RWPE1 (cell line): ENCODE measurements at regions of chr3 and their contacts with region 1.

Region 1: GRCh38 chr3:159311400-159311799 is 509.5 kb downstream of the MFSD1 start:
- DNase-seq: no peak
- H3K27ac ChIP-seq: no peak overlapping the region
- CTCF ChIP-seq: no peak

Region 2: DNA sequence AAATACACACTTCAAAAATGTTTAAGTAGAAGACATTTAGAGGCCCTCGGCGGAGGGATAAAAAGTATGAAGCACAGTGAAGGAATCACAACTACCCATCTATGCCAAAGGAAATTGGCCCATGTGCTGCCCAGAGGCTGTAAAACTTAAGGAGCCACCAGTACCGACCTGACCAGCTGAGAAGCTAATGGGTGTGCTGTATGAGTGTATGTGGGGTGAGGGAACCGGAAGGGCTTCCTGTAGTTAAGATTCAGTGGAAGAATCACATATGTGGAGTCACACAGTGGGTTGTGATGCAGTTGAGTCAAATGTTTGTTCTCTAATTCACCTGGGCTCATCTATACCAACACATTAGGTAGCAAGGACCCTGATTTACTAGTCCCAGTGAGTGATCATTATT is 161.2 kb after region 1 on chr3:
- CTCF ChIA-PET with region 1: no interaction called
- POLR2A ChIA-PET with region 1: no interaction called
- DNase-seq: no peak
- H3K27ac ChIP-seq: no peak overlapping the region
- CTCF ChIP-seq: no peak

Region 3: DNA sequence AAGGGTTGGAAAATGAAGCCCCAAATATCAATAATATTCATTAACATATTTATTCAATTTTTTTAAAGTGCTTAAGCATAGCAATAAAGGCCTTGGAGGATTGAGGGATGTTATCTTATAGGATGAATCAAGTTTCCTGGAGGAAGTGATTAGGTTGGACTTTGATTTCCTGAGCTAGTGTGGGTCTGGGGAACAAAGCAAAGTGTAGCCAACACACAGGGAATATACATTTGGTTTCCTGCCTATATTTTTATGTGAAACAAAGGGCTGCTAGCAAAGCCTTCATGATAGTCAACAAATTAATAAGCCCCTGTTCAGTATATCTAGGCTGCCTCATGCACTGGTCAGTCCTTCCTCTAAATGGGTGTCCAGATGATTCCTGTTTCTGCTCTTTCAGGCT is 416.1 kb after region 1 on chr3:
- CTCF ChIA-PET with region 1: no interaction called
- POLR2A ChIA-PET with region 1: interaction called, 11 read pairs
- DNase-seq: no peak
- H3K27ac ChIP-seq: no peak overlapping the region
- CTCF ChIP-seq: no peak